ENCODE measurements at regions of chr9 and their contacts with region 1.

Region 1: GRCh38 chr9:133742849-133743444 is 4.8 kb upstream of the SARDH start:
- DNase-seq: peak; percentile 77
- ATAC-seq: peak; percentile 84
- H3K4me3 Mint-ChIP-seq: no peak overlapping the region
- H3K27ac Mint-ChIP-seq: no peak overlapping the region
- H3K4me1 Mint-ChIP-seq: peaks cover 9% of the 10 kb centered on the region
- H3K27me3 Mint-ChIP-seq: peaks cover 19% of the 10 kb centered on the region
- CTCF ChIP-seq: peak; percentile 98

Region 2: DNA sequence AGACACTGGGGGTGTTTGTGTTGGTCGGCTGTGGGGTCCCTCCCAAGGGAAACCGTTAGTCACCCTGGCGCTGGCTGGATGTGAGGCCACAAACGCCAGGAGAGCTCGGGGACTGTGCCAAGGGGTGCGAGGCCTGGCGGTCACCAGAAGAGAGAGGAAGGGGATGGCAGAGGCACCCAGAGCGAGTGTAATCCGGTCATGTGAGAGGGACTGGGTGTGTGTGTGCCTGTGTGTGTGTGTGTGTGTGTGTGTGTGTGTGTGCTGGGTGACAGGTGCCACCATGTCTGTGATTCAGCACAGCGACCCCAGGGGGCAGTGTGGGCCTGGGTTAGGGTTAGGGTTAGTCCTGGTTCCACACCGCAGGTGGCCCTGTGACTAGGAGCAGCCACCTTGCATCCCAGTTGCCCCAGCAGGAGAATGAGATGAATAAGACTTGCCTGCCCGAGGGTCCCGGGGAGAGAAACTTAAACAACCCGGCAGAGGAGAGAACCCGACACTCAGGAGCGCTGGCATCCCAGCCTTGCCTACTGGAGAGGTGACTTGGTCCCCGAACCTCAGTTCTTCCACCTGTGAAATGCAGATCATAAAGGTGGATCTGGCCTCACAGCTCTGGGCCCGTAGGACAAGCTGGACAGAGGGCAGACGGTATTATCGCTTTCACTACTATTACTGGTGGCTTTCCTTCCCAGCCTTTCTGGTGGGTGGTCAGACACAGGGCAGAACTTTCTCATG is 209.8 kb before region 1 on chr9:
- CTCF ChIA-PET with region 1: no interaction called
- POLR2A ChIA-PET with region 1: no interaction called
- intact Hi-C with region 1: loop called (anchors 1 kb)
- DNase-seq: peak; percentile 49
- ATAC-seq: peak; percentile 86
- H3K4me3 Mint-ChIP-seq: no peak overlapping the region
- H3K27ac Mint-ChIP-seq: no peak overlapping the region
- H3K4me1 Mint-ChIP-seq: peaks cover 11% of the 10 kb centered on the region
- H3K27me3 Mint-ChIP-seq: peaks cover 31% of the 10 kb centered on the region
- CTCF ChIP-seq: no peak

Region 3: DNA sequence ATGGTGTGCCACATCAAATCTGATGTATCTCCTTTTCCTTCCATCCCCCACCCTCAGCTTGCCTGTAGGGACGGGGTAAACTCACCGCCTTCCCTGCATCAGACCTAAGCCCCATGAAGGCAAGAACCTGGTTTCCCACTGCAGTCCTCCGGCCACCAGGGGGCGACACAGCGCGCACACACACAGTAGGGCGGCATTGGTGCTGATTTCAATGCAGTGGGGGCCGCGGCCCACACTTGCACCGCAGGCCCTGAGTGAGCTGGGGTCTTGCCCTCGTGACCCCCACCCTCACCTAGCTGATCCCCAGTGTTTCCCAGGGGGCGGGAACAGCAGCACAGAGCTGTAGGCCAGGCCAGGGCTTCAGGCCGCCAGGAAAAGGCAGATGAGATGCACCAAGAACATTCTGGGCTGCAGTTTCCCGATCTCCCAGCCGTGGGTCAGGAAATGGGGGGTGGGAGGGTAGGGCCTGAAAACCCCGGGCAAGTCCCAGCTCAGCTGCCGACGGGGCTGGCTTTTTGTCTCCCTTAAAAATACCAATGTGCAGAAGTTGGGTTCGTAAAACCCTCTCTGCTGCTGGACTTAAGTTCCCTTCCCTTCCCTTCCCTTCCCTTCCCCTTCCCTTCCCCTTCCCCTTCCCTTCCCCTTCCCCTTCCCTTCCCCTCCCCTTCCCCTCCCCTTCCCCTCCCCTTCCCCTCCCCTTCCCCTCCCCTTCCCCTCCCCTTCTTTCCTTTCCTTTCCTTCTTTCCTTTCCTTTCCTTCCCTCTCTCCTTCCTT is 153.3 kb before region 1 on chr9:
- CTCF ChIA-PET with region 1: interaction called, 3 read pairs
- POLR2A ChIA-PET with region 1: no interaction called
- intact Hi-C with region 1: loop called (anchors 5 kb)
- DNase-seq: no peak
- ATAC-seq: no peak
- H3K4me3 Mint-ChIP-seq: no peak overlapping the region
- H3K27ac Mint-ChIP-seq: no peak overlapping the region
- H3K4me1 Mint-ChIP-seq: peaks cover 16% of the 10 kb centered on the region
- H3K27me3 Mint-ChIP-seq: peaks cover 9% of the 10 kb centered on the region
- CTCF ChIP-seq: no peak

Region 4: DNA sequence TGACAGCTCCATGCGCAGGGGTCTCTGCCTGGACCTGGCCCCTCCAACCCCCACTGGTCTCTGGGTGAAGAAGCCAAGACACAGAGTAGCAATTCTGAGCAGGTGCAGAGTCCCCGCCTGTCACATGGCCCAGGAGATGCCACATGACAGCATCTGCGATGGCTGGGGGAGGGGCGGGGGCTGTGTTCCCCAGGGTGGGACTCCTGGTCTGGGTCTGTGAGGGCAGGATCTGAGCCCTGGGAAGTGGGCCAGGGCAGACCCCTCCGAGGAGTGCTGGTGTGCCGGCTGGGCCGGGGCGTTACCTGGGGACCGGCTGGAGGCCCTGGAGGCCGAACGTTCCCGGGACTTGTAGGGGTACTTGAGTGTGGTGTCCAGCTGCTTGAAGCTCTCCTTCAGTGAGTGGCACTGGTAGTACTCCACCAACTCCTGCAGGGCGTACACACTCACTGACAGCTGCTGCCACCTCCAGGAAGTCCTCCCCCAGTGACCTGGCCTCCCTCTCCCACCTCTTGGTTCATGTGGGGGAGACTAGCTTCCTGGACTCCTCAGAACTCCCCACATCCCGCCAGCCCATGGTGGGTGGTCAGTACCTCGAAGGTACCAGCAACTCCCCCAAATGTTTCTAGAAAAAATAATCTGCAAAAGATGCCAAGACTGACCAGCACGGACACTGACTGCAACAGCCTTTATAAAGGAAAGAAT is 27.3 kb after region 1 on chr9:
- CTCF ChIA-PET with region 1: no interaction called
- POLR2A ChIA-PET with region 1: no interaction called
- intact Hi-C with region 1: no loop called
- DNase-seq: no peak
- ATAC-seq: no peak
- H3K4me3 Mint-ChIP-seq: no peak overlapping the region
- H3K27ac Mint-ChIP-seq: no peak overlapping the region
- H3K4me1 Mint-ChIP-seq: no peaks in the 10 kb centered on the region
- H3K27me3 Mint-ChIP-seq: no peaks in the 10 kb centered on the region
- CTCF ChIP-seq: no peak

Region 5: DNA sequence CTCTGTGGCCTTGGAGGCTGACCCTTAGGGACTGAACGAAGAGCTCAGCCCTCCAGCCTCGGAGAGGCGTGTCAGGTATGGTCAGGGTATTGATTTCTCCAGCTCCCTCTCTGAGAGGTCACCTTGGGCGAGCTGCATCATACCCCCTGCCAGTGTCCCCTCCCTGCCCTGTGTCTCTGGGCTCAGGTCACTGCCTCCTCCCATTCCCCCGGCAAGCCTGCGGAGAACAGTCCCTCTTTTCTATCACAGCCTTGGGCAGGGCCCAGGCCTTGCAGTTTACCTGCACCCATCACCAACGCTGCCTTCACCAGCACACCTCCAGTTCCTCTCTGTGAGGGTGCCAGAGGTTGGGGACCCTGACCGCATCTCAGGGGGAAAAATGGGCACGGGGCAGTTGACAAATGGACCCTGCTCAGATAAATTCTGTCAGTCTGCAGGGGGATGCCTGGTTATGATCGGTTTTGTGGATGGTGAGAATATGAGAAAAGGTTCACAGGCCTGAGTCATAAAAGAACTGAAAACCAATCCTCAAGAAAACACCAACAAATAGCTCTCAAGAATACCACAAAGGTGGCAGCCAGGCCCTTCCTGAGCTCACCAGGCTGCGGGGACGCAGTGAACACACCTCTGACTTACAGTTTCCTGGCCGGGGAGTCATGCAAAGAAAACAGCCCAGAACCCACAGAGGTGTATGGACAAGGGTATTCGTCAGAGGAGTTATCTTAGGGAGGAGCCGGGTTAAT is 558.6 kb after region 1 on chr9:
- CTCF ChIA-PET with region 1: no interaction called
- POLR2A ChIA-PET with region 1: no interaction called
- intact Hi-C with region 1: no loop called
- DNase-seq: no peak
- ATAC-seq: no peak
- H3K4me3 Mint-ChIP-seq: no peak overlapping the region
- H3K27ac Mint-ChIP-seq: no peak overlapping the region
- H3K4me1 Mint-ChIP-seq: peaks cover 3% of the 10 kb centered on the region
- H3K27me3 Mint-ChIP-seq: peaks cover 2% of the 10 kb centered on the region
- CTCF ChIP-seq: no peak